Psoas muscle (tissue), 8 donors: ENCODE measurements at regions of chr4 and their contacts with region 1.

Region 1: GRCh38 chr4:138049350-138049749 is 192.8 kb downstream of the SLC7A11 start:
- DNase-seq: no peak
- ATAC-seq: no peak
- H3K4me3 ChIP-seq: no peak overlapping the region
- H3K27ac ChIP-seq: no peak overlapping the region
- H3K4me1 ChIP-seq: no peaks in the 10 kb centered on the region
- H3K27me3 ChIP-seq: no peaks in the 10 kb centered on the region
- CTCF ChIP-seq: no peak

Region 2: GRCh38 chr4:138014590-138015288 is 34.6 kb before region 1 on chr4:
- intact Hi-C with region 1: no loop called
- DNase-seq: no peak
- ATAC-seq: no peak
- H3K4me3 ChIP-seq: no peak overlapping the region
- H3K27ac ChIP-seq: no peak overlapping the region
- H3K4me1 ChIP-seq: no peaks in the 10 kb centered on the region
- H3K27me3 ChIP-seq: no peaks in the 10 kb centered on the region
- CTCF ChIP-seq: no peak

Region 3: DNA sequence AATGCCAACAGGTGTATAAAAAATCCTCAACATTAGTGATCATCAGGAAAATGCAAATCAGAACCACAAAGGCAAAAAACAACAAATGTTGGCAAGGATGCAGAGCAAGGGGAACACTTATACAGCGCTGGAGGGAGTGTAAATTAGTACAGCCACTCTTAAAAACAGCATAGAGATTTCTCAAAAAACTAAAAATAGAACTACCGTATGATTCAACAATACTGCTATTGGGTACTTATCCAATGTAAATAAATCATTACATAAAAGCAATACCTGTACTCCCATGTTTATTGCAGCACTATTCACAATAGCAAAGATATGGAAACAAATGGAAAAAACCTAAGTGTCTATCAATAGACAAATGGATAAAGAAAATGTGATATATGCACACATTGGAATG is 21.5 kb after region 1 on chr4:
- intact Hi-C with region 1: loop called in 1 of 2 experiments (anchors 1 kb)
- DNase-seq: no peak
- ATAC-seq: no peak
- H3K4me3 ChIP-seq: no peak overlapping the region
- H3K27ac ChIP-seq: no peak overlapping the region
- H3K4me1 ChIP-seq: no peaks in the 10 kb centered on the region
- H3K27me3 ChIP-seq: no peaks in the 10 kb centered on the region
- CTCF ChIP-seq: no peak